ENCODE measurements at regions of chr5 and their contacts with region 1.

Region 1: GRCh38 chr5:62256161-62257019 is 49.6 kb upstream of the KIF2A start:
- DNase-seq: no peak
- ATAC-seq: peak; percentile 81
- H3K4me3 ChIP-seq: peak overlapping the region; percentile 8; the same call in 1 of the 2 replicates
- H3K27ac ChIP-seq: peak overlapping the region; percentile 56
- H3K4me1 ChIP-seq: 0 out of 2 replicates have a peak, but pooled peaks cover 3% of the 10 kb centered on the region
- H3K27me3 ChIP-seq: no peaks in the 10 kb centered on the region
- CTCF ChIP-seq: no peak
- EP300 ChIP-seq: no peak
- POLR2A ChIP-seq: no peak
- RAD21 ChIP-seq: no peak

Region 2: GRCh38 chr5:62132279-62132678 is 124.1 kb before region 1 on chr5:
- CTCF ChIA-PET with region 1: no interaction called
- POLR2A ChIA-PET with region 1: no interaction called
- RAD21 ChIA-PET with region 1: no interaction called
- SMC1A ChIA-PET with region 1: no interaction called
- in situ Hi-C with region 1: no loop called
- intact Hi-C with region 1: no loop called
- DNase-seq: no peak
- ATAC-seq: no peak
- H3K4me3 ChIP-seq: no peak overlapping the region
- H3K27ac ChIP-seq: no peak overlapping the region
- H3K4me1 ChIP-seq: no peaks in the 10 kb centered on the region
- H3K27me3 ChIP-seq: no peaks in the 10 kb centered on the region; a peak in 2 of 4 replicates
- CTCF ChIP-seq: no peak
- EP300 ChIP-seq: no peak
- POLR2A ChIP-seq: no peak
- RAD21 ChIP-seq: no peak

Region 3: GRCh38 chr5:62268234-62268633 is 11.8 kb after region 1 on chr5:
- CTCF ChIA-PET with region 1: interaction called, 3 read pairs
- POLR2A ChIA-PET with region 1: interaction called, 4 read pairs
- RAD21 ChIA-PET with region 1: interaction called, 11 read pairs
- SMC1A ChIA-PET with region 1: interaction called, 22 read pairs
- in situ Hi-C with region 1: no loop called
- intact Hi-C with region 1: no loop called
- DNase-seq: peak; percentile 26
- ATAC-seq: peak; percentile 69
- H3K4me3 ChIP-seq: no peak overlapping the region
- H3K27ac ChIP-seq: no peak overlapping the region
- H3K4me1 ChIP-seq: no peaks in the 10 kb centered on the region
- H3K27me3 ChIP-seq: no peaks in the 10 kb centered on the region
- CTCF ChIP-seq: no peak
- EP300 ChIP-seq: no peak
- POLR2A ChIP-seq: no peak
- RAD21 ChIP-seq: no peak

Region 4: DNA sequence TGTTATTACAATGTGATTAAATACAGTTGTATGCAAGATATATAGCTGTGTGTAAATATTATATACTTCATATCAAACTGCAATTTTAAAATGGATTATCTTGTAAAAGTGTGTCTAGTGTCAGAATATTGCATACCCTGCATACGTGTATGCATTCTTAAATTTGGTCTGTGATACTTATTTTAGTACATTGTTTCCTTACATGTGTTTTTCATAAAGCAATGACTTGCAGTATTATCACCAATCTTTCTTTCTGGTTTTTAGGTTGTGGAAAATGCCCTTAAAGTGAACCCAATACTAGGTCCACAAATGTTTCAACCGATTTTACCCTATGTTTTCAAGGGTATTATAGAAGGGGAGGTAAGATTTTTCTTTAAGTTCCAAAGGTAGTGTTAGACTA is 293.7 kb after region 1 on chr5:
- CTCF ChIA-PET with region 1: no interaction called
- POLR2A ChIA-PET with region 1: no interaction called
- RAD21 ChIA-PET with region 1: no interaction called
- SMC1A ChIA-PET with region 1: no interaction called
- in situ Hi-C with region 1: no loop called
- intact Hi-C with region 1: no loop called
- DNase-seq: no peak
- ATAC-seq: no peak
- H3K4me3 ChIP-seq: no peak overlapping the region
- H3K27ac ChIP-seq: no peak overlapping the region
- H3K4me1 ChIP-seq: no peaks in the 10 kb centered on the region
- H3K27me3 ChIP-seq: no peaks in the 10 kb centered on the region
- CTCF ChIP-seq: no peak
- EP300 ChIP-seq: no peak
- POLR2A ChIP-seq: no peak
- RAD21 ChIP-seq: no peak